ENCODE measurements at regions of chr19 and their contacts with region 1.

Region 1: DNA sequence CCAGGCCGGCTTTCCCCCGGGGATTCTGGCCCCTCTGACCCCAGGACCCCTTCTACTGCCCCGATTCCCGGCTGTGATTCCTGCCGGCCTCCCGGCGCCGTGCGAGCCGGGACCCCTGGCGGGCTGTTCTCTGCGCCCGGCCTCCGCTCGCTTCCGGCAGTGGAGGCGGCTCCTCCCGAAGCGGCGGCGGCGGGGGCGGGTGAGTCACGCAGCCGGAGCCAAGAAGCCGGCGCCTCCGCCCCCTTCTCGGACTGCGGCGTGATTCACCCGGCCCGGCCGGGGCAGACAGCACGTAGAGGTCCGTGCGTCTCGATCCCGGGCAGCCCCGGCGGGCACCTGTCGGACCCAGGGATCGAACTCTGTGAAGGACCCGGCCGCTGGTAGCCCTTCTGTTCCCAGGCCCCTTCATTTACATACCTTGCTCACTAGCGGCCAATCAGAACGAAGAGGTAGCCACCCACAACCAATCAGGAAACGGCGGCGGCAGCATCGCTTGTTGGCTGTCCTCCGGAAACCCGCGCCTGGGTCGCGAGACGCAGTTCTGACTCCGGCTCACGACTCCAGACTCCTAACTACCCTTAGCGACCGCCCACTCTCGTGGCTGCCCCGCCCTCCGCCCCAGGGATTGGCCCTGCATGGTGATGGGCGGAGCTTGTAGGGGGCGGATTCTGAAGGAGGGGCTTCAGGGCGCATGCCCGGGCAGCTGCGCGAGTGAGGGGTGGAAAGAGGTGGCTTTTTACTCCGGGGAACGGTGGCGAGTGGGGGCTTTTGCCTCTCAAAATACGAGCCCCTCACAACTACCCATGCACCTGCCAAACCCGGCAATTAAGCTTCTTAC is at the start of gene SERTAD1:
- DNase-seq: peak; percentile 99
- H3K4me3 ChIP-seq: peak within 1 kb of the TSS; percentile 80 to 95 (median 93)
- H3K27ac ChIP-seq: peak within 1 kb of the TSS; percentile 95
- H3K4me1 ChIP-seq: peaks cover 19% of the 10 kb centered on the region
- H3K27me3 ChIP-seq: no peaks in the 10 kb centered on the region
- CTCF ChIP-seq: peak; percentile 40 to 74
- POLR2A ChIP-seq: peak; percentile 99
- total RNA-seq, gene SERTAD1: 8.8 and 10.0 TPM in 2 replicates

Region 2: GRCh38 chr19:39833464-39834286 is 592.0 kb before region 1 on chr19 and contains the start of gene DYRK1B:
- CTCF ChIA-PET with region 1: no interaction called
- POLR2A ChIA-PET with region 1: no interaction called
- dilution Hi-C with region 1: no loop called
- intact Hi-C with region 1: loop called (anchors 5 kb)
- DNase-seq: peak; percentile 97
- H3K4me3 ChIP-seq: peak within 1 kb of the TSS; percentile 55 to 93 (median 66)
- H3K27ac ChIP-seq: peak within 1 kb of the TSS; percentile 77
- H3K4me1 ChIP-seq: peaks cover 8% of the 10 kb centered on the region
- H3K27me3 ChIP-seq: no peaks in the 10 kb centered on the region
- CTCF ChIP-seq: no peak
- POLR2A ChIP-seq: peak; percentile 41
- total RNA-seq, gene DYRK1B: 26.8 and 30.8 TPM in 2 replicates

Region 3: DNA sequence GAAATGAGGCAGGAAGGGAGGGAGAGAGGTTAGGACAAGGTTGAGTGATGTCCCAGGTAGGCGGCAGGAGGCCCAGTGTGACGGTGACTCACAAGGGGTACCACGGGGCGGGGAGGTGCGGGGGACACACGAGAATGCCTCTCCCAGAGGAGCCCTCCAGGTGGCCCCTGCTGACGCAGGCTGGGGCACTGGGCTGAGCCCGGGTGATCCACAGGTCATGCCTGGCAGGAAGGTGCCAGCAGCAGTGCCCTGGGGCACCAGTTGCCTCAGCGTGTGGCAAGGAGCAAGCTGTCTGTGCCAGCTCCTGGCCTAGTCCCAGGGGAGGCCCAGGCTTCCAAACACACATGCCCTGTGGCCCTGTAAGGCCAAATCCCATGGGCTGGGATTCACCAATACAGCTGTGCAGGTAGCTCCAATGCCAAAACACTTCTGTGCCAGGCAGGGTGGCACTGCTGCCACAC is 168.6 kb before region 1 on chr19:
- CTCF ChIA-PET with region 1: no interaction called
- POLR2A ChIA-PET with region 1: no interaction called
- dilution Hi-C with region 1: no loop called
- intact Hi-C with region 1: no loop called
- DNase-seq: no peak
- H3K4me3 ChIP-seq: no peak overlapping the region
- H3K27ac ChIP-seq: no peak overlapping the region
- H3K4me1 ChIP-seq: no peaks in the 10 kb centered on the region
- H3K27me3 ChIP-seq: no peaks in the 10 kb centered on the region
- CTCF ChIP-seq: no peak
- POLR2A ChIP-seq: no peak

Region 4: GRCh38 chr19:40348125-40348913 is 77.3 kb before region 1 on chr19 and contains the starts of genes C19orf47 and PLD3:
- CTCF ChIA-PET with region 1: interaction called, 3 read pairs
- POLR2A ChIA-PET with region 1: interaction called, 3 read pairs
- dilution Hi-C with region 1: no loop called
- intact Hi-C with region 1: loop called (anchors 5 kb)
- DNase-seq: peak; percentile 99
- H3K4me3 ChIP-seq: peak within 1 kb of the TSS; percentile 65 to 98 (median 95)
- H3K27ac ChIP-seq: peak within 1 kb of the TSS; percentile 83
- H3K4me1 ChIP-seq: peaks cover 13% of the 10 kb centered on the region
- H3K27me3 ChIP-seq: no peaks in the 10 kb centered on the region
- CTCF ChIP-seq: no peak
- POLR2A ChIP-seq: peak; percentile 98
- total RNA-seq, gene C19orf47: 16.4 and 17.3 TPM in 2 replicates
- total RNA-seq, gene PLD3: 166 and 172 TPM in 2 replicates

Region 5: GRCh38 chr19:40403262-40403984 is 22.2 kb before region 1 on chr19:
- CTCF ChIA-PET with region 1: interaction called, 23 read pairs
- POLR2A ChIA-PET with region 1: interaction called, 8 read pairs
- dilution Hi-C with region 1: no loop called
- intact Hi-C with region 1: loop called (anchors 1 kb)
- DNase-seq: peak; percentile 90
- H3K4me3 ChIP-seq: peak overlapping the region; percentile 43 to 67 (median 47)
- H3K27ac ChIP-seq: no peak overlapping the region
- H3K4me1 ChIP-seq: peaks cover 2% of the 10 kb centered on the region
- H3K27me3 ChIP-seq: no peaks in the 10 kb centered on the region
- CTCF ChIP-seq: no peak
- POLR2A ChIP-seq: no peak

Region 6: DNA sequence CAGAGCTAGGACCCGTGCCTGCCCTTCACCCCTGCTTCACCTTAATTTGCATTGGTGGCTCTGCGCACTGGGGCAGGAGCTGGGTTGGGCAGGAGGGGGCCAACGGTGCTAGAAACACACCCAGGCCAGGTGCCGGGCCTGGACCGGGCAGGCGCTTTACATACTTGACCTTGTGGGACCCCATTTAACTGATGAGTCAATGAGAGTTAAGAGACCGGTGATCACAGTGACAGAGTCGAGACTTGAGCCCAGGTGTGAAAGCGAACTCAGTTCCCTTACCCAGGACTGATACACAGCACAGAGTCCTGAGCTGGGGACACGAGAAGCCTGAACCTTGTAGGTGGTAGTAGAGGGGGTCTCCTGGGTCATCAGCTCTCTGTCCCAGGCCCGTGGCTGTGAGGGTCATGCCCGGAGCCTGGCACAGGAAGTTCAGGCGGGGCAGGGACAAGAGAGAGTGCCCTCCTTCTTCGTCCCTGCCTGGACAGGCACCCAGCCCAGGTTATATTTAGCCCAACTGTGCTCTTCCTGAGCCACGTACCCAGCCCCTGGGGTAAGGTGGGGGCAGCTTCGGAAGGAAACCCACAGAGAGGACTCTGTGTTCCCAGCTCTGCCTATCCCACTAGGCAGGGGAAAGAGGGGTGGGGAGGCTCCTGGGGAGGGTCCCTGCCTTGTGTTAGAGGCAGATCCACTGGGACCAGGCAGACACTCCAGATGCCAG is 14.4 kb before region 1 on chr19:
- CTCF ChIA-PET with region 1: interaction called, 12 read pairs
- POLR2A ChIA-PET with region 1: interaction called, 3 read pairs
- dilution Hi-C with region 1: no loop called
- intact Hi-C with region 1: no loop called
- DNase-seq: no peak
- H3K4me3 ChIP-seq: no peak overlapping the region
- H3K27ac ChIP-seq: no peak overlapping the region
- H3K4me1 ChIP-seq: no peaks in the 10 kb centered on the region
- H3K27me3 ChIP-seq: no peaks in the 10 kb centered on the region
- CTCF ChIP-seq: no peak
- POLR2A ChIP-seq: no peak

Region 7: DNA sequence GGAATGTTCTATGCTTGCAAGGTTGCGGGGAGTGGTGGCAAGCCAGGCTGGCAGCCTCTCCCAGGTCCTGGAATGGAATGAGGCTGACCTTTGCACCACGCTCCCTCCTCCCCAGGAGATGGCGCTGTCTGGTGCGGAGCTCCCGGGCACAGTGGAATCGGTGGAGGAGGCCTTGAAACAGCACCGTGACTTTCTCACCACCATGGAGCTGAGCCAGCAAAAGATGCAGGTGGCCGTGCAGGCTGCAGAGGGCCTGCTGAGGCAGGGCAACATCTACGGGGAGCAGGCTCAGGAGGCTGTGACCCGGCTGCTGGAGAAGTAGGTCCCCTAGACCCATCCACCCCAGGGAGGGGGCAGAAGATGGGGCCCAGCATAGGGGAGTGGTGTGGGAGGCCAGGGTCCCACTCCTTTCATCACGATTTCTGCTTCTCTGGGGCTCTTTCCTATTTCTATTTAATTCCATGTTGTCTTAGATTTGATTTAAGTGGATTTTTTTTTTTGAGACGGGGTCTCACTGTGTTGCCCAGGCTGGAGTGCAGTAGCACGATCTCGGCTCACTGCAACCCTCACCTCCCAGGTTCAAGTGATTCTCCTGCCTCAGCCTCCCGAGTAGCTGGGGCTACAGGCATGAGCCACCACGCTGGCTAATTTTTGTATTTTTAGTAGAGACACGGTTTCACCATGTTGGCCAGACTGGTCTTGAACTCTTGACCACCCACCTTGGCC is 97.8 kb after region 1 on chr19:
- CTCF ChIA-PET with region 1: interaction called, 10 read pairs
- POLR2A ChIA-PET with region 1: no interaction called
- dilution Hi-C with region 1: no loop called
- intact Hi-C with region 1: no loop called
- DNase-seq: peak; percentile 49
- H3K4me3 ChIP-seq: no peak overlapping the region
- H3K27ac ChIP-seq: no peak overlapping the region
- H3K4me1 ChIP-seq: no peaks in the 10 kb centered on the region
- H3K27me3 ChIP-seq: peaks cover 2 to 7% of the 10 kb centered on the region in 2 experiments
- CTCF ChIP-seq: peak; percentile 67 to 84
- POLR2A ChIP-seq: no peak

Measured in endothelial cell of umbilical vein (primary cell).